ENCODE measurements at regions of chr6 and their contacts with region 1.

Region 1: GRCh38 chr6:34638834-34639736 is 57.5 kb downstream of the ILRUN start:
- DNase-seq: no peak
- H3K4me3 ChIP-seq: no peak overlapping the region
- H3K4me3 Mint-ChIP-seq: no peak overlapping the region
- H3K27ac Mint-ChIP-seq: no peak overlapping the region
- H3K4me1 ChIP-seq: peaks cover 12% of the 10 kb centered on the region
- H3K4me1 Mint-ChIP-seq: no peaks in the 10 kb centered on the region
- H3K27me3 ChIP-seq: no peaks in the 10 kb centered on the region
- H3K27me3 Mint-ChIP-seq: no peaks in the 10 kb centered on the region
- CTCF ChIP-seq: no peak

Region 2: GRCh38 chr6:34618430-34619182 is 20.5 kb before region 1 on chr6:
- CTCF ChIA-PET with region 1: no interaction called
- POLR2A ChIA-PET with region 1: no interaction called
- intact Hi-C with region 1: loop called (anchors 1 kb)
- DNase-seq: no peak
- H3K4me3 ChIP-seq: no peak overlapping the region
- H3K4me3 Mint-ChIP-seq: no peak overlapping the region
- H3K27ac Mint-ChIP-seq: no peak overlapping the region
- H3K4me1 ChIP-seq: peaks cover 7% of the 10 kb centered on the region
- H3K4me1 Mint-ChIP-seq: peaks cover 12% of the 10 kb centered on the region
- H3K27me3 ChIP-seq: no peaks in the 10 kb centered on the region
- H3K27me3 Mint-ChIP-seq: no peaks in the 10 kb centered on the region
- CTCF ChIP-seq: no peak

Measured in Caco-2 (cell line).